GM13976 (cell line): ENCODE measurements at regions of chr2 and their contacts with region 1.

Region 1: DNA sequence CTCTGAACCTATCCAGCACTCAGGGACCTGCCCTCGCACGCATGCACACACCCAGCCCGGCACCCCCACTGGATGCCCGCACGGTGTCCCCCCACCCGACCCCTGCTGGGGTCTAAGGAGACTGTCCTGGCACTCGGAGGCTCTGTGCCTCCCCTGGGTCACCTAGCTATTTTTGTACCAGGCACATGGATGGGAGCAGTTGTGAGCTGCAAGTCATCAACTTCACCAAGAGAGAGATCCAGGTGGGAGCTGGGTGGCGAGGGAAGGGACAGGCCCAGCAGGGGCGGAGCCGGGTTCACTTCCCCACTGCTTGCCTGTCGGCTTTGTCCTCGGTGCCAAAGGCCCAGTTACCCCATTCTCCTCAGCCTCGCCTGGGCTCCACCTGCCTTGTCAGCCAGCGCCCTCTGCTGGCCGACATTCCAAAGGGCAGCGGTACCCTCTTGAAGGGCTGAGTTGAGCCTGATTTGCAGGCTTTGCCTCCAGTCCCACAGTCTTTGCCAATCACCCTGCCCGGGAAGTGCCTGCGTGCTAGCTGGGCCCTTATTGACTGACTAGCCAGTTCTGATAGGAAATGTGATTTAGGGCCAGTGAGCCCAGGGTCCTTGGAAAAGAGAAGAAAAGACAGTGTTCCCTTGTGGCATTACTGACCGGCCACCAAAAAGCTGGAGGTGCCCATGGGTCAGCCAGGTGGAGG is 5.8 kb downstream of the NT5DC4 start:
- DNase-seq: peak; percentile 94
- CTCF ChIP-seq: peak; percentile 99

Region 2: DNA sequence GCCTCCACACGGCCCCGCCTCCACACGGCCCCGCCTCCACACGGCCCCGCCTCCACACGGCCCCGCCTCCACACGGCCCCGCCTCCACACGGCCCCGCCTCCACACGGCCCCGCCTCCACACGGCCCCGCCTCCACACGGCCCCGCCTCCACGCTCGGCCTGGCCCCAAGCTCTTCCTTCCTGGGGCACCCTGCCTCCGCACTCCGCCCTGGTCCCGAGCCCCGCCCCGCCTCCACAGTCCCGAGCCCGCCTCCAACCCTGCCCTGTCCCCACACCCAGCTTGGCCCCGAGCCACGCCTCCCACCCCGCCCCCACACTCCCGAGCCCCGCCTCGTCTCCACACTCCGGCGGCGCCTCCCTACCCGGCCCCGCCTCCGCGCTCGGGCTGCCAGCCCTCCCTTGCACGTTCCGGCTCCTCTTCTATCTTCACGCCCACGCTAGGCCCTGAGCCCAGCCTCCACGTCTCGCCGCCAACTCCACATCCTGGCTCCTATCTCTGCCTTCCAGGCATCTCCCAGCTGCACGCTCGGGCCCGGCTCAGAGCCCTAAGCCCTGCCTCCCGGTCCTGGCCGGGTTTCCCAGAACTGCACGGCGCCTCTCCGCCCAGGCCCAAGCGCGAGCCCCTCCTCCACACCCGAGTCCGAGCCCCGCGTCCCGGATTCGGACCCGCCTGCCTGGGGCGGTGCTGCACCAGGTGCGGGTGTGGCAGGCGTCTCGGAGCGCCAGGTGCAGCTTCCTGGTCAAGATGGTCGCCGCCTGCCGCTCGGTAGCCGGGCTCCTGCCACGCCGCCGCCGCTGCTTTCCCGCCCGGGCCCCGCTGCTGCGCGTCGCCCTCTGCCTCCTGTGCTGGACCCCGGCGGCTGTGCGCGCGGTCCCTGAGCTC is 671.6 kb before region 1 on chr2 and contains the start of gene TMEM87B:
- in situ Hi-C with region 1: loop called (anchors 25 kb)
- DNase-seq: peak; percentile 95
- CTCF ChIP-seq: no peak